Left colon (tissue), 2 donors: ENCODE measurements at regions of chr1 and their contacts with region 1.

Region 1: GRCh38 chr1:3012456-3013291 is 8.6 kb upstream of the ACTRT2 start:
- DNase-seq: peak in 1 of 2 donors; percentile 67
- ATAC-seq: peak; percentile 71

Region 2: DNA sequence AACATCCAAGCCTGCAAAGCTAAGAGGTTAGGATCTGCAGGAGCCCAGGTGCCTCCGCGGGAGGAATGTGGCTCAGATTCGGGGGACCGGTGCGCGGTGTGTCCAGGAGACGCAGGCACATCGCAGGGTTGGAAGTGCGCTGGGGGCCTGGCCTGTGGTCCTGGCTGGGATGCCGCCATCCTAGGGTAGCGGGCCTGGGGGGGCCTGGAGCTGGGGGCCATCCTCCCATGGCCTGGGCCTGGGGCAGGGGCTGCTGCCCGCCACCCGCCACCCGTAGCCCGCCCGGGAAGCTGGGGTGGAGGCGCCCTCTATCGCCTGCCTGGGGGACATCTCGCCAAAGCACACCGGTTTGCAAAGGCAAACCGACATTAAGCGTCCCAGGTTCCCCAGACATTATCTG is 271.2 kb after region 1 on chr1:
- intact Hi-C with region 1: loop called in 1 of 2 experiments (anchors 10 kb)
- DNase-seq: peak in 1 of 2 donors; percentile 27
- ATAC-seq: peak; percentile 59

Region 3: GRCh38 chr1:3410142-3410925 is 397.7 kb after region 1 on chr1:
- intact Hi-C with region 1: no loop called
- DNase-seq: peak in 1 of 2 donors; percentile 61
- ATAC-seq: peak; percentile 93

Region 4: GRCh38 chr1:3423245-3423829 is 410.7 kb after region 1 on chr1:
- intact Hi-C with region 1: loop called (anchors 5 to 10 kb)
- DNase-seq: peak; percentile 87 to 91
- ATAC-seq: peak; percentile 92